Spleen (tissue), 13 donors: ENCODE measurements at regions of chr17 and their contacts with region 1.

Region 1: GRCh38 chr17:50478391-50479381 is at the start of gene RSAD1:
- DNase-seq: peak; percentile 98
- H3K4me3 ChIP-seq: peak within 1 kb of the TSS; percentile 68 to 93 (median 78)
- H3K27ac ChIP-seq: peak within 1 kb of the TSS; percentile 80 to 93 (median 88)
- H3K4me1 ChIP-seq: peaks cover 18 to 49% (median 42%) of the 10 kb centered on the region in 6 donors
- H3K27me3 ChIP-seq: no peaks in the 10 kb centered on the region
- CTCF ChIP-seq: peak; percentile 64 to 97 (median 91)
- POLR2A ChIP-seq: peak; percentile 74 to 91 (median 83)
- total RNA-seq, gene RSAD1: 24.4 to 56.2 (median 39.4) TPM

Region 2: GRCh38 chr17:50372758-50373556 is 105.7 kb before region 1 on chr17 and contains the starts of genes EME1 and MRPL27:
- intact Hi-C with region 1: loop called (anchors 10 kb)
- DNase-seq: peak; percentile 95
- H3K4me3 ChIP-seq: peak within 1 kb of the TSS; percentile 52 to 87 (median 75)
- H3K27ac ChIP-seq: peak within 1 kb of the TSS; percentile 86 to 99 (median 96)
- H3K4me1 ChIP-seq: peaks cover 8 to 43% (median 28%) of the 10 kb centered on the region in 6 donors
- H3K27me3 ChIP-seq: no peaks in the 10 kb centered on the region
- CTCF ChIP-seq: peak in 1 of 11 experiments; percentile 3
- POLR2A ChIP-seq: no peak
- total RNA-seq, gene EME1: 0.66 to 3.6 (median 1.9) TPM
- total RNA-seq, gene MRPL27: 26.4 to 40.7 (median 34.0) TPM